ENCODE measurements at regions of chr2 and their contacts with region 1.

Region 1: DNA sequence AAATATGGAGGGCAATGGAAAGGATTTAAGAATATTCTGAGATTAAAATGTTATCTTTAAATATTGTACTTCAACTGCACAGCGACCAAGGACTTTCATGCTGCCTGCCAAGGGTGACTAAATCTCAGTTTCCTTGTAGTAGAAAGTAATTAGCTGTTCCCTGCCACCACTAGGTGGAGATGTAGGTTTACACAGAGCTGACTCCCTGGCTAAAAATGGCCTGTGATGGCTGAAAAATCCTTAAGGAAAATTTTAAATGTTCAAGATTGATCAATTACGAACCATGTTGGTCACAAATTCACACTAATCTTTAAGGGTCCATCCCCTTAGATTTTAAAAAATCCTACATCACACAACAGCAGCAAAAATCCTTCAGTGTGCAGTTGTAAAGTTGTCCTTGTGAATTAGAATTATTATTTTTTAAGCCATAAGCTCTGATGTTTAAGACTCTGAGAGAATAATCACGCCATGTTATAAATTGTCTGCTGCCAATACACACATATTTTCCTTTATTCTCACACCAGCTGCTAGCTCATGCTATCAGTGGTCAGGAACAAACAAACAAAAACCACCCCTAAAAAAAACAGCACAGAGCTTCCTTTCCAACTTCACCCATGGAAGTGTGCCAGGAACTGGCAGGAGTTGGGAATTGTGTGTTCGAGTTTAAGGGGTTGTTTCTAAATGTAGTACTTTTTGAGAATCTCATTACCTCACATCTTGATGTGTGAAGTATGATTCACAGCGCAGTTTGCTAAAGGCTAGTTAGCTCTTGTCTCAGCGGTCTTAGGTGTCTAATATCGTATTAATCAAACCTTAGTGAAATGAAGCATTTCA is 399.8 kb downstream of the TMEM182 start:
- H3K4me3 ChIP-seq: no peak overlapping the region
- H3K27ac ChIP-seq: no peak overlapping the region
- H3K4me1 ChIP-seq: no peaks in the 10 kb centered on the region
- CTCF ChIP-seq: peak; percentile 23; the same call in 1 of the 2 replicates

Region 2: DNA sequence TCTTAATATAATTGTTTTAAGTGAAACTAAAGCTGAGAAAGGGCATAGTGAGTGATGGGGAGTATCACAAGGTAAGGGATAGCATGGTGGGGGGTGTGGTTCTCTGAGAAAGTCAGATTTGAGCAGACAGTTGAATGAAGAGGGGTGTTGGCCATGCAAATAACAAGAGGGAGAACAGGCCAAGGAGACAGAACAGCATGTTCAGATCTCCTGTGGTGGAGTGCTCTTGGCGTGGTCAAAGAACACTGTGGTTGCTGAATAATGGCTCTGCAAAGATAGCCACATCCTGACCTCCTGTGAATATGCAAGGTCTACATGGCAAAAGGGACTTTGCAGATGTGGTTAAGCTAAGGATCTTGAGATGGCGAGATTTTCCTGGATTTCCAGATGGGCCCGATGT is 10.6 kb before region 1 on chr2:
- CTCF ChIA-PET with region 1: interaction called, 16 read pairs
- POLR2A ChIA-PET with region 1: no interaction called
- H3K4me3 ChIP-seq: no peak overlapping the region
- H3K27ac ChIP-seq: no peak overlapping the region
- H3K4me1 ChIP-seq: no peaks in the 10 kb centered on the region
- CTCF ChIP-seq: no peak

Region 3: GRCh38 chr2:104944495-104944894 is 1782.8 kb after region 1 on chr2:
- CTCF ChIA-PET with region 1: interaction called, 13 read pairs
- POLR2A ChIA-PET with region 1: no interaction called
- H3K4me3 ChIP-seq: no peak overlapping the region
- H3K27ac ChIP-seq: no peak overlapping the region
- H3K4me1 ChIP-seq: no peaks in the 10 kb centered on the region
- CTCF ChIP-seq: peak; percentile 58

Measured in HEK293 (cell line).